A673 (cell line): ENCODE measurements at regions of chrX and their contacts with region 1.

Region 1: DNA sequence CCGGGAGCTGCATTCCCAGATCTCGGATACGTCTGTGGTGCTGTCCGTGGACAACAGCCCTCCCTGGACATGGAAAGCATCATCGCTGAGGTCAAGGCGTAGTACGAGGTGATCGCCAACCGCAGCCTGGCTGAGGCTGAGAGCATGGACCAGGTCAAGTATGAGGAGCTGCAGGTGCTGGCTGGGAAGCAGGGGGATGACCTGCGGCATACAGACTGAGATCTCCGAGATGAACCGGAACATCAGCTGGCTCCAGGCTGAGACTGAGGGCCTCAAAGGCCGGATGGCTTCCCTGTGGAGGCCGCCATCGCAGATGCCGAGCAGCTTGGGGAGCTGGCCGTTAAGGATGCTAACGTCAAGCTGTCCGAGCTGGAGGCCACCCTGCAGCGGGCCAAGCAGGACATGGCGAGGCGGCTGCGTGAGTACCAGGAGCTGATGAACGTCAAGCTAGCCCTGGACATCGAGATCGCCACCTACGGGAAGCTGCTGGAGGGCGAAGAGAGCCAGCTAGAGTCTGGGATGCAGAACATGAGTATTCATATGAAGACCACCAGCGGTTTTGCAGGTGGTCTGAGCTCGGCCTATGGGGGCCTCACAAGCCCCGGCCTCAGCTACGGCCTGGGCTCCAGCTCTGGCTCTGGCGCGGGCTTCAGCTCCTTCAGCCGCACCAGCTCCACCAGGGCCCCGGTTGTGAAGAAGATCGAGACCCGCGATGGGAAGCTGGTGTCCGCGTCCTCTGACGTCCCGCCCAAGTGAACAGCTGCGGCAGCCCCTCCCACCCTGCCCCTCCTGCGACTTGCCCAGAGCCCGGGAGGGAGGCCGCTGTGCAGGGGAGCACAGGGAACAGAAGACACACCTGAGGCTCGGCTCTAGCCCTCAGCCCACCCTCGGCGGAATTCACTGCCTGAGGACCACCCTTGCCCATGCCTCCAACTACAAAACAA is 29.4 kb upstream of the GABRA3 start:
- DNase-seq: no peak
- H3K4me3 ChIP-seq: no peak overlapping the region
- H3K27ac ChIP-seq: no peak overlapping the region
- H3K4me1 ChIP-seq: no peaks in the 10 kb centered on the region
- H3K27me3 ChIP-seq: no peaks in the 10 kb centered on the region
- CTCF ChIP-seq: no peak

Region 2: DNA sequence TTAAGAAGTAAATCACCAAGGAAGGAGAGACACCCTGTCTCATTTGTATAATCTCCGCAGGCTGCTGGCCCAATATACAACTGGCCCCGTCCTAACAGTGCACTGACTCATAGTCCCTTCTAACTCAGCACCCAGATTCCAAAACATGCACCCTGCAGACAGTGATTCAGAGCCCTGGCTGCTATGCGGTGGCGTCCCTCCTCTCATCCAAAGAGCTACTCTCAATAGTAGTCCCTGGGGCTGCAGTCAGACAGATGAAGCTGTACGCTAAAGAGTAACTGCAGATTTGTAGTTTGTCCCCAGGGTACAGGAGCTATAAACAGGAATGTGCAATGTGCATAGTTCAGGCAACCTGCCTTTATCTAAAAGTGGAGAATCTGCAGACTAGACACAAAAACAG is 52.4 kb before region 1 on chrX:
- CTCF ChIA-PET with region 1: no interaction called
- POLR2A ChIA-PET with region 1: no interaction called
- intact Hi-C with region 1: loop called (anchors 10 kb)
- DNase-seq: no peak
- H3K4me3 ChIP-seq: no peak overlapping the region
- H3K27ac ChIP-seq: no peak overlapping the region
- H3K4me1 ChIP-seq: no peaks in the 10 kb centered on the region
- H3K27me3 ChIP-seq: no peaks in the 10 kb centered on the region
- CTCF ChIP-seq: no peak